ENCODE measurements at regions of chr10 and their contacts with region 1.

Region 1: DNA sequence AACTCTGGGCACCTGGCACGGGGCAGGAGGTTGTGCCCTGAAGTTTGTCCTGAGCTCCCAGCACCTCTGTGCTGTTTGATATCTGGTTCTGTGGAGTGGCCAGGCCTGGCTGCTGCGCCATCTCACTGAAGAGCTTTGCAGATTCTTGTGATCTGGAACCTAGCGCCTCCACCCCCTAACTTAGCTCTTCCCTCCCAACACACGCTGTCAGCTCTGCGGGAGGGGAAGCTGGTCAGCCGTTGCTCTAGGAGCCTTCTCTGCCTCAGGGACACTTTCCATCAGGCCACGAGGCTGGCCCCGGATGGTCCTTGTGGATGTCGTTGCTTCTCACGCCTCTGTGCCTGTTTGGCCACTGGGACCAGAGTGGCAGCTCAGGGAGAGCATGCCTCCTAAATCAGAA is 213.2 kb downstream of the CCDC3 start:
- DNase-seq: no peak
- H3K4me3 ChIP-seq: no peak overlapping the region
- H3K27ac ChIP-seq: no peak overlapping the region
- H3K4me1 ChIP-seq: no peaks in the 10 kb centered on the region; a peak in 1 of 7 replicates
- H3K27me3 ChIP-seq: no peaks in the 10 kb centered on the region
- CTCF ChIP-seq: no peak
- EP300 ChIP-seq: no peak
- POLR2A ChIP-seq: no peak
- RAD21 ChIP-seq: no peak

Region 2: GRCh38 chr10:12774204-12774894 is 13.9 kb before region 1 on chr10:
- CTCF ChIA-PET with region 1: interaction called, 11 read pairs
- POLR2A ChIA-PET with region 1: no interaction called
- DNase-seq: peak in 1 of 2 experiments; percentile 64
- H3K4me3 ChIP-seq: peak overlapping the region in 2 of 4 experiments; percentile 9 to 34; a peak in 3 of 8 replicates
- H3K27ac ChIP-seq: no peak overlapping the region
- H3K4me1 ChIP-seq: peaks cover 0 to 7% (median 3%) of the 10 kb centered on the region in 4 experiments; a peak in 5 of 7 replicates
- H3K27me3 ChIP-seq: no peaks in the 10 kb centered on the region; a peak in 1 of 7 replicates
- CTCF ChIP-seq: no peak
- EP300 ChIP-seq: no peak
- POLR2A ChIP-seq: no peak
- RAD21 ChIP-seq: no peak

Region 3: DNA sequence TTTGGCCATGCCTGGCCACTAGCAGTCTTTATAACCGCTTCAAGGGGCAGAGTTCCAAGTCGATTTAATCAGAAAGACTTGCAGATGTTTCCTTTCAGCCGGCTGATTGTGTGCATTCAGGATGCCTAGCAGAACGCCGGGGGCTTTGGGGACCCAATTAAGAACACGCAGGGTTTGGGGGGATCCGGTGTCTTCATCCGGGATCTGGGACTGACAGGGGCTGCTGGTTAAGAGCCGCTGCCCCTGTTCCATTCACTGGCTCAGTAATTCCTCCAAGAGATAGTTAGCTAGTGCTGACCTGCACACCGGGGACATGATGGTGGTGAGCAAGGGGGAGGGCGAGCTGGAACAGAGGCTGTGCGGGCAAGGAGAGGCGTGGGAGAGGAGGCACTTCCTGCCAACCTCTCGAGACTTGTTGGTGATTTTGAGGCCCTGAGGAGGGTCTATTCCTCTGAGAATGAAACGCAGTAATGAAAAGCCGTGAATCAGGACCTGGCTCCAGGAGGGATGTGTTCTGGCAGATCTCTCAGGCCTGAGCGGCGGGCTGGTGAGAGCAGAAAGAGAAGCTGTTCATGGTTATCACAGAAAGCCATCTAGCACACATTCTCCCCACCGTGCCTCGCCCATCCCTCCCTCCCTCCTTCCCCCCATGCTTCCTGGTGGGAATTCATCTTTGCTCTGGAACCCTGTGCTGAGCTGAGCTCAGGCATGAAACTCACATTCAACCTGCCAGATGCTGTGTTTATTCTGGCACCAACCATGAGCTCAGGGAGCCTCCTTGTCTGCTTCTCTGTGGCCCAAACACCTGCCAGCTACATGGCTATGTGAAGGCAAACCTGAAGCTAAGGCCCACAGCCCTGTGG is 61.3 kb after region 1 on chr10:
- CTCF ChIA-PET with region 1: no interaction called
- POLR2A ChIA-PET with region 1: no interaction called
- DNase-seq: no peak
- H3K4me3 ChIP-seq: no peak overlapping the region
- H3K27ac ChIP-seq: no peak overlapping the region
- H3K4me1 ChIP-seq: peaks cover 0 to 4% (median 0%) of the 10 kb centered on the region in 4 experiments; a peak in 1 of 7 replicates
- H3K27me3 ChIP-seq: no peaks in the 10 kb centered on the region
- CTCF ChIP-seq: no peak
- EP300 ChIP-seq: no peak
- POLR2A ChIP-seq: no peak
- RAD21 ChIP-seq: no peak

Measured in H1 (cell line).